Activated CD4-positive, alpha-beta T cell treated with anti-CD3 and anti-CD28 coated beads, Interleukin-2, amount 10 ng/mL, durations not matched to agents 24 days and 14 days (primary cell): ENCODE measurements at regions of chr11 and their contacts with region 1.

Region 1: DNA sequence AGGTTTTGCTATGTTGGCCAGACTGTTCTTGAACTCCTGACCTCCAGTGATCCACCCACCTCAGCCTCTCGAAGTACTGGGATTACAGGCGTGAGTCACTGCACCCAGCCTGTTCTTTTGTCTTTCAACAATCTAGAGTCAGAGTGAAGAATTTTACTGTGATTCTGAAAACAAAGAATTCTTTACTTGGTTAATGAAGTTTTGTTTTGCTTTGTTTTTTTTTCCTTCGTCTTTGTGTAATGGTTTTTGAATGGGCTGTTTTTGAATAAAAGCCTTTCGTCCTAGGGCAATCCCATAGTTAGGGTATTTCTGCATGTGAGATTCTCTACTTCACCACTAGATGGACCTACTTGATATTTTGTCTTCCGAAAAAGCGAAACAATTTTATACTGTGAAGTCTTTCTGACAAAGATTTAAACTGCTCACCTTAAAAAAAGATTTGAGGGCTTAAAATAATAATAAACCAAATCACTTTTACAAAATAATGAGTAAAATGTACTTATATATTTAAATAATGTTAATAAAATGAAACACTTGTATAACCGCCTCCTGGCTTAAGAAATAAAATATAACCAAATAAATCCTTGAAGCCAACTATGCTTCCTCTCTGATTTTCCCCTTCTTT is 43.4 kb upstream of the SC5D start:
- DNase-seq: peak; percentile 57
- H3K4me3 Mint-ChIP-seq: no peak overlapping the region
- H3K27ac Mint-ChIP-seq: no peak overlapping the region
- H3K4me1 Mint-ChIP-seq: peaks cover 2% of the 10 kb centered on the region
- H3K27me3 Mint-ChIP-seq: peaks cover 10% of the 10 kb centered on the region

Region 2: GRCh38 chr11:121318848-121319834 is 70.0 kb after region 1 on chr11:
- intact Hi-C with region 1: loop called (anchors 1 kb)
- DNase-seq: peak; percentile 80
- H3K4me3 Mint-ChIP-seq: peak overlapping the region; percentile 0
- H3K27ac Mint-ChIP-seq: no peak overlapping the region
- H3K4me1 Mint-ChIP-seq: peaks cover 20% of the 10 kb centered on the region
- H3K27me3 Mint-ChIP-seq: no peaks in the 10 kb centered on the region

Region 3: DNA sequence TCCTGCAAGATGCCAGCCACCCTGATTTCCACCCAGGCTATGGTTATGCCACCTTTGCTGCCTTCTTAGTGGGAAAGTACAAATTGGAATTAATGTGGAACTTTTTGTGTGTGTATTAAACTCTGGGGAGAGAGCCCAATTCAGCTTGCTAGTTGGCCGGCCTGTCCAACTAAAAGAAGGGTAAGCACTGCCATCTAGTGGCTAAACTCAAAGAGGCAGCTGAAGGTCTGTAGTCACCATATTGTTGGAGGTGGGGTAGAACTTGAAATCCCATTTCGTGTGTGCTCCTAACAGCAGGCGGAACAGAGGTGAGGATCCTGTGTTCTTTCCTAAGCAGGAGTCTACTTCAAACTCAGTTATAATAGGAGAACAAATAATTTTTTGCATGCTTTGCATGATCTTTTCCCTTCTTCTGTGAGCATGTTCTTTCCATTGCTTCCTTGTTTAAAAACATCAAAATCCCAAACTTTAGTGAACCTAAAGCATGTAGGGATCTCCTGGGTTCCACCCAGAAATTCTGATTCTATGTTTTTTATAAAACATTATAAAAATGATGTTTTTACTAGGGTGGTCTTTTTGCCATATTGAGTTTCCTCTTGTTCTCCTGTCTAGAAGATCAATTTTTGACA is 342.4 kb after region 1 on chr11:
- intact Hi-C with region 1: loop called (anchors 1 kb)
- DNase-seq: peak; percentile 93
- H3K4me3 Mint-ChIP-seq: no peak overlapping the region
- H3K27ac Mint-ChIP-seq: no peak overlapping the region
- H3K4me1 Mint-ChIP-seq: peaks cover 19% of the 10 kb centered on the region
- H3K27me3 Mint-ChIP-seq: no peaks in the 10 kb centered on the region